ENCODE measurements at regions of chr2 and their contacts with region 1.

Region 1: GRCh38 chr2:137910641-137911040 is 53.6 kb upstream of the HNMT start:
- DNase-seq: no peak
- H3K4me3 ChIP-seq: no peak overlapping the region
- H3K27ac ChIP-seq: no peak overlapping the region
- H3K4me1 ChIP-seq: no peaks in the 10 kb centered on the region
- H3K27me3 ChIP-seq: no peaks in the 10 kb centered on the region
- CTCF ChIP-seq: peak in 2 of 3 experiments; percentile 64 to 69

Region 2: GRCh38 chr2:138090330-138090729 is 179.7 kb after region 1 on chr2:
- intact Hi-C with region 1: loop called (anchors 1 kb)
- DNase-seq: no peak
- H3K4me3 ChIP-seq: no peak overlapping the region
- H3K27ac ChIP-seq: no peak overlapping the region
- H3K4me1 ChIP-seq: peaks cover 0 to 4% of the 10 kb centered on the region in 2 donors
- H3K27me3 ChIP-seq: no peaks in the 10 kb centered on the region
- CTCF ChIP-seq: peak; percentile 37 to 63 (median 43)

Region 3: GRCh38 chr2:138787053-138787666 is 876.5 kb after region 1 on chr2:
- intact Hi-C with region 1: loop called (anchors 1 kb)
- DNase-seq: no peak
- H3K4me3 ChIP-seq: no peak overlapping the region
- H3K27ac ChIP-seq: no peak overlapping the region
- H3K4me1 ChIP-seq: no peaks in the 10 kb centered on the region
- H3K27me3 ChIP-seq: no peaks in the 10 kb centered on the region
- CTCF ChIP-seq: peak; percentile 45 to 63 (median 50)

Region 4: GRCh38 chr2:138827426-138828054 is 916.9 kb after region 1 on chr2:
- intact Hi-C with region 1: loop called (anchors 2 kb)
- DNase-seq: no peak
- H3K4me3 ChIP-seq: no peak overlapping the region
- H3K27ac ChIP-seq: no peak overlapping the region
- H3K4me1 ChIP-seq: no peaks in the 10 kb centered on the region
- H3K27me3 ChIP-seq: no peaks in the 10 kb centered on the region
- CTCF ChIP-seq: peak in 2 of 3 experiments; percentile 62 to 74